ENCODE measurements at regions of chrX and their contacts with region 1.

Region 1: GRCh38 chrX:46446727-46447378 is 98.4 kb downstream of the ZNF674 start:
- DNase-seq: peak; percentile 66 to 93 (median 79)
- ATAC-seq: peak; percentile 88
- H3K4me3 ChIP-seq: peak overlapping the region; percentile 87
- H3K4me3 Mint-ChIP-seq: peak overlapping the region; percentile 91
- H3K27ac ChIP-seq: peak overlapping the region; percentile 50 to 83
- H3K27ac Mint-ChIP-seq: peak overlapping the region; percentile 92
- H3K4me1 ChIP-seq: peaks cover 18% of the 10 kb centered on the region
- H3K4me1 Mint-ChIP-seq: peaks cover 10% of the 10 kb centered on the region
- H3K27me3 ChIP-seq: no peaks in the 10 kb centered on the region
- H3K27me3 Mint-ChIP-seq: no peaks in the 10 kb centered on the region
- CTCF ChIP-seq: no peak

Region 2: GRCh38 chrX:45623266-45623665 is 823.6 kb before region 1 on chrX:
- CTCF ChIA-PET with region 1: no interaction called
- POLR2A ChIA-PET with region 1: no interaction called
- intact Hi-C with region 1: no loop called
- DNase-seq: no peak
- ATAC-seq: no peak
- H3K4me3 ChIP-seq: no peak overlapping the region
- H3K4me3 Mint-ChIP-seq: no peak overlapping the region
- H3K27ac ChIP-seq: no peak overlapping the region
- H3K27ac Mint-ChIP-seq: no peak overlapping the region
- H3K4me1 ChIP-seq: no peaks in the 10 kb centered on the region
- H3K4me1 Mint-ChIP-seq: no peaks in the 10 kb centered on the region
- H3K27me3 ChIP-seq: no peaks in the 10 kb centered on the region
- H3K27me3 Mint-ChIP-seq: no peaks in the 10 kb centered on the region
- CTCF ChIP-seq: no peak

Region 3: DNA sequence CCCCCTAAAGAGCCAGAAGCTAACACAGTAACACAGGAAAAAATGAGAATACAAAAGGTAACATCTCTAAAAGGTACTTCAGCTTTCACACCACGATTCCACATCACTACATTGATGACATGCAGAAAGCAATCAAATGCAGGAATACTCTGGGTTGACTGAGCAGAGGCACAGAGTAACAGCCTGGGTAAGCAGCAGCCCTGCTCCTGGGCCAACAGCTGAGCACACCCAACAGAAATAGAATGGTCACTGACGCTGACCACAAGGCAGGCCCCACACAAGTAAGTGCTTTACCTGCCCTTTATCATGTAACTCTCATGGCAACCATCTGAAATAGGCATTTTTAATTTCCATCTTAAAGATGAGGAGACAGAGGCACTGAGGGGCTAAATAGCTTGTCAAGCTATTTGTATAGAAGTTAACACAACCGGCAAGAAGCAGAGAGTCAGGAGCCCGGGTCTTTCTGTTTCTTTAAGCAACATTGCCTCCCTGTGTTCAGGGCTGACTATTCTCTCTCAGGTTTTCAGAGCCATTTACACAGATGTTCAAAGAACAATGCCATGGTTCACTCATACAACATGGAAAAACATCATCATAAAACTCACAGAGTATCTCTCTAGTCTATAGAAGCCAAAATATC is 70.5 kb before region 1 on chrX:
- CTCF ChIA-PET with region 1: no interaction called
- POLR2A ChIA-PET with region 1: no interaction called
- intact Hi-C with region 1: no loop called
- DNase-seq: peak in 7 of 14 experiments; percentile 3 to 53 (median 25)
- ATAC-seq: peak; percentile 55
- H3K4me3 ChIP-seq: no peak overlapping the region
- H3K4me3 Mint-ChIP-seq: no peak overlapping the region
- H3K27ac ChIP-seq: no peak overlapping the region
- H3K27ac Mint-ChIP-seq: no peak overlapping the region
- H3K4me1 ChIP-seq: no peaks in the 10 kb centered on the region
- H3K4me1 Mint-ChIP-seq: no peaks in the 10 kb centered on the region
- H3K27me3 ChIP-seq: no peaks in the 10 kb centered on the region
- H3K27me3 Mint-ChIP-seq: no peaks in the 10 kb centered on the region
- CTCF ChIP-seq: peak; percentile 25

Region 4: DNA sequence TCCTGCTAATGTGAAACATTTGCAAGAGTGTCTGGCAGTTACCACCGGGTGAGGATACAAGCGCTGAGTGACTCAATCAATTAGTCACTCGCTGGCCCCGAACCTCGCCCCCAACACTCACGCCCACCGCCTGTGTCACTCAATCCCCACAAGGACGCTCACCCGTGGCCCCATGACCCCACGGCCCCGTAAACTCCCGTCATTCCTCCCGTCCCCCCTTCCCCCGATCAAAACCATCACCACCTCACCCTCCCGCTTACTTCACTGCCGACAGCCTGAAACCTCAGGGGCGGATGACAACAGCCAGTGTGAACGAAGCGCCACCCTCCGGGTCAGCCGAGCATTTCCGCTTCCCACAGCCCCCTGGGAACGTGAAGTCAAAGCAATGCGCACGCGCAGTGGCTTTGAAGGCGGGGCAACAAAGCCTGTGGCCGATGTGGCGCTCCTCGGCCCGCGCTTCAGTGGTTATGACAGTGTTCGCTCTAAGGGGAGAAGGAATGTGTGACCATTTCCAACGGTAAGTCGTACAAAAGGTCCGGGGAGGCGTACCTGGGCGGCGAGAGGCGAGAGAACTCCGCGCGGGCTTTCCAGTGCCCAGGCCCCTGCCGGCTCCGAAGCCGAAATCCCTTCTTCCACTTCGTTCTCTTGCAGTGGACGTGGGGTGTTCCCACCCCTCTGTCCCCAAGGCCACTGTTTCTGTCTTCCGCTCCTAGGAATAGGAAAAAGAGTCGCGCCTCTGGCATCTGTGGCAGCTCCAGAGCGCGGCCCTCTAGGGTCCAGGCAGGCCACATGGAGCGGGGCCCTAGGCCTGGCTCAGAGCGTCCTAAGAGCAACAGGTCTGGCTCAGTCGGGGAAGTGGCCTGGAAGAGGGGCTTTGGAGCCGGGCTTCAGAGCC is 98.5 kb after region 1 on chrX and contains the start of gene ZNF674:
- CTCF ChIA-PET with region 1: no interaction called
- POLR2A ChIA-PET with region 1: no interaction called
- intact Hi-C with region 1: loop called in 1 of 2 experiments (anchors 2 kb)
- DNase-seq: peak; percentile 85 to 96 (median 90)
- ATAC-seq: peak; percentile 92
- H3K4me3 ChIP-seq: peak within 1 kb of the TSS; percentile 96
- H3K4me3 Mint-ChIP-seq: peak within 1 kb of the TSS; percentile 93
- H3K27ac ChIP-seq: peak within 1 kb of the TSS; percentile 72 to 78
- H3K27ac Mint-ChIP-seq: peak within 1 kb of the TSS; percentile 93
- H3K4me1 ChIP-seq: peaks cover 32% of the 10 kb centered on the region
- H3K4me1 Mint-ChIP-seq: peaks cover 28% of the 10 kb centered on the region
- H3K27me3 ChIP-seq: no peaks in the 10 kb centered on the region
- H3K27me3 Mint-ChIP-seq: no peaks in the 10 kb centered on the region
- CTCF ChIP-seq: peak; percentile 22
- total RNA-seq, gene ZNF674: 1.2 to 1.9 TPM

Region 5: GRCh38 chrX:46704767-46705386 is 258.0 kb after region 1 on chrX:
- CTCF ChIA-PET with region 1: no interaction called
- POLR2A ChIA-PET with region 1: no interaction called
- intact Hi-C with region 1: no loop called
- DNase-seq: peak in 2 of 14 experiments; percentile 5 to 9
- ATAC-seq: peak; percentile 11
- H3K4me3 ChIP-seq: no peak overlapping the region
- H3K4me3 Mint-ChIP-seq: no peak overlapping the region
- H3K27ac ChIP-seq: no peak overlapping the region
- H3K27ac Mint-ChIP-seq: no peak overlapping the region
- H3K4me1 ChIP-seq: peaks cover 2% of the 10 kb centered on the region
- H3K4me1 Mint-ChIP-seq: peaks cover 7% of the 10 kb centered on the region
- H3K27me3 ChIP-seq: no peaks in the 10 kb centered on the region
- H3K27me3 Mint-ChIP-seq: no peaks in the 10 kb centered on the region
- CTCF ChIP-seq: no peak

Region 6: DNA sequence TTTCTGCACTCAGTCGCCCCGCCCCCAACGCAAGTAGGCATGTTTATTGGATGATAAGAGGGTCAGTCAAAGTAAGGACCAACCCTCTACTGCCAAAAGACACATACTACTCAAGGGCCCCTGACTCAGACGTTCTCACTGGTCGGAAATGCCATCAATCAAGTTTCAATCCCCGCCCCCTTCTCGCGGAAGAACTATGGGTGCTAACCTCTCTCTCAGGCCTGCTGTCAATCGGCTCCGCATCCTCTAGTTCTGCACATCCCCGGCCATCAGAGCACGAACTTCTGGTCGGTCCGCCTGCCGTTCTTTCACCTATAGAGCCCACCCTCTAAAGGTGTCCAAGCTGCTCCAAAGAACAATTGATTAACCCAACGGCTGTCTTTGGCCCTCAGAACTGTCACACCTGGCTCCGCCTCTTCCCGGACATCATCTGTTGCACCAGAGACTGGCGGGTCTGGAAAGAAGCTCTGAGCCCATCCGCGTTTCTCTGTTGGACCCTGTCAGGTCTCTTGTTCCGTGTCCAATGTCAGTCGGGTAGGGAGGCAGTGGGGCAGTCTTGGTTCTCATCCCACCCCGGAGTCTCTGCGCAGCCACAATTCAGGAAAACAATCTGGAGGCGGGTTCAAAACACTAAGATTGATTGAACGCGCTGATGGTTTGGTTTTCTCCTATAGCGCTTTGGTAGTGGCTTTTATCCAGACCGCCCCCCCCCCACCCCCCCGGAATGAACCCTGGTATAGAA is 682.5 kb after region 1 on chrX:
- CTCF ChIA-PET with region 1: no interaction called
- POLR2A ChIA-PET with region 1: no interaction called
- intact Hi-C with region 1: loop called in 1 of 2 experiments (anchors 5 kb)
- DNase-seq: peak; percentile 77 to 95 (median 84)
- ATAC-seq: peak; percentile 98
- H3K4me3 ChIP-seq: peak overlapping the region; percentile 75
- H3K4me3 Mint-ChIP-seq: peak overlapping the region; percentile 99
- H3K27ac ChIP-seq: peak overlapping the region; percentile 53 to 60
- H3K27ac Mint-ChIP-seq: peak overlapping the region; percentile 98
- H3K4me1 ChIP-seq: peaks cover 13% of the 10 kb centered on the region
- H3K4me1 Mint-ChIP-seq: peaks cover 10% of the 10 kb centered on the region
- H3K27me3 ChIP-seq: no peaks in the 10 kb centered on the region
- H3K27me3 Mint-ChIP-seq: no peaks in the 10 kb centered on the region
- CTCF ChIP-seq: no peak